Activated naive CD4-positive, alpha-beta T cell treated with anti-CD3 and anti-CD28 coated beads for 36 hours (primary cell): ENCODE measurements at regions of chr3 and their contacts with region 1.

Region 1: GRCh38 chr3:33648793-33649192 is 69.3 kb downstream of the CLASP2 start:
- DNase-seq: no peak
- H3K4me3 Mint-ChIP-seq: no peak overlapping the region
- H3K27ac Mint-ChIP-seq: no peak overlapping the region
- H3K4me1 Mint-ChIP-seq: peaks cover 15% of the 10 kb centered on the region
- H3K27me3 Mint-ChIP-seq: no peaks in the 10 kb centered on the region

Region 2: DNA sequence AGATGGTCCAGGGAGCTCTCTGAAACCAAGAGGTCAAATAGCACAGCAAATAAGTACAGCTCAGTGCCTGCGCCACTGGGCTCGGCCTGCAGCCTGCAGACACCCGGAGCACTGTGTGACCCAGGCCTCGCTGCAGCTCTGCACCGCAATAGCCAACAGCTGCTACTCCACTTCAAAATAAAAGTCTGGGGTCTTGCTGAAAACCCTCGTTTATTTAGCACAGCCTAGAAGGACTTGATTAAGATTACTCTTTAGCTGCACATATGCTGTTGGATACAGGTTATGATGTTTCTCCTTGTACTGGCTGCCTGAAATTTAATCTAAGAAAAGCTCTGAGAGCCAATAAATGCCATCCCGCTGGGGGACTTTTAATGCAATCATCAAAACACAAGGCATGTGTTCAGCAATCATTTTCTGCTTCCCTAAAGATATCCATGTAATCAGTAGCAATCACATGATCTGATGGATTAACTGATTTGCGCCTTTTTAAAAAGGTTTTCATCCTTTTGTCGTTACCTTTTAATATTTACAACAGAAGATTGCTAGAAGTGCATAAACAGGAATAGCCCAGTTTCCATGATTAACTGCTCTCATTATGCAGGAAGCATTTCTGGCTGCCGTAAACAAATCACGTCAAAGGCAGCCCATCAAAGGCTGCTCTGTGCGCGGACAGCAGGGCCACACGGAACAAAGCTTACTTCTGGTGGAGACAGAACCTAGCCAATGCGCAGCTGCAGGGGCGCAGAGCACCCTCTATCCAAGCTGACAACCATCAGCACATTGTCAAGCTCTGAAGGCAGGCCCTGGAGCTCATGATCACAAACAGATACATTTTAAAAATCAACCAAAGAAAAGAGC is 10.4 kb after region 1 on chr3:
- CTCF ChIA-PET with region 1: interaction called, 3 read pairs
- intact Hi-C with region 1: loop called (anchors 2 kb)
- DNase-seq: peak; percentile 32
- H3K4me3 Mint-ChIP-seq: peak overlapping the region; percentile 49
- H3K27ac Mint-ChIP-seq: no peak overlapping the region
- H3K4me1 Mint-ChIP-seq: peaks cover 29% of the 10 kb centered on the region
- H3K27me3 Mint-ChIP-seq: no peaks in the 10 kb centered on the region

Region 3: DNA sequence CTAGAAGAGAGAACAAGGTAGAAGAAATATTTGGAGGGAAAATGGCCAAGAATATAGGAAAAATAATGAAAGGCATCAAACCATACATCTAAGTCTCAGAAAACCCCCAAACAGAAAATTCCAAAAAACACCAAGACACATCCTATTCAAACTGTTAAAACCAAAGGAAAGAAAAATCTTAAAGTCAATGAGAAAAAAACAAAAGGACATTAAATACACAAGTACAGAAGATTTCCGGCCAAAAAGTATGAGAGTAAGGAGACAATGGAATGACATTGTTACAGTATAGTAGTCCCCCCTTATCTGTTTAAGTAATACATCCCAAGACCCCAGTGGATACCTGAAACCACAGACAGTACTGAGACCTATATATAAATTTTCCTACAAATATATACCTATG is 50.5 kb after region 1 on chr3:
- CTCF ChIA-PET with region 1: no interaction called
- intact Hi-C with region 1: no loop called
- DNase-seq: no peak
- H3K4me3 Mint-ChIP-seq: no peak overlapping the region
- H3K27ac Mint-ChIP-seq: no peak overlapping the region
- H3K4me1 Mint-ChIP-seq: peaks cover 14% of the 10 kb centered on the region
- H3K27me3 Mint-ChIP-seq: no peaks in the 10 kb centered on the region